Mammary epithelial cell (primary cell): ENCODE measurements at regions of chr9 and their contacts with region 1.

Region 1: GRCh38 chr9:78601957-78602565 is 305.1 kb downstream of the PSAT1 start:
- DNase-seq: peak; percentile 75
- H3K4me3 ChIP-seq: peak overlapping the region in 1 of 3 experiments; percentile 2
- H3K27ac ChIP-seq: peak overlapping the region; percentile 31
- H3K4me1 ChIP-seq: peaks cover 6% of the 10 kb centered on the region
- H3K27me3 ChIP-seq: no peaks in the 10 kb centered on the region
- CTCF ChIP-seq: peak; percentile 87 to 93

Region 2: DNA sequence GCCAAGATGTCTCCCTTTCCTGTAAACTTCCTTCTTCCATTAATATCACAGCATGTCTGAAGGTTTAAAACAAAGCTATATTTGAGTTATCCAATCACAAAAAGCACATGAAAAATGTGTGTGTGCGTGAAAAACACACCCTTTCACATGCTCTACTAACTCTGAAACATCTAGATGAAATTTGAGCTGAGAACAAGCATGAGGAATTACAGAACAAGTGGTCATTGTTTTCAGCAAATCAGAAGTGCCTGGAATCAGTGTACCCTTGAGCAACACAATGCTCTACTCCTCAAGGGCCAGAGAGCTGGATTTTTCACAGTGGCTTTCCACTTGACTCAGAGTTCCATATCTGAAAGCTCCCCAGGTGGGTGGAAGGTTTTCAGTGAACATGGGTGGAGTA is 49.3 kb before region 1 on chr9:
- CTCF ChIA-PET with region 1: no interaction called
- dilution Hi-C with region 1: no loop called
- in situ Hi-C with region 1: no loop called
- intact Hi-C with region 1: no loop called
- DNase-seq: peak; percentile 59
- H3K4me3 ChIP-seq: no peak overlapping the region
- H3K27ac ChIP-seq: no peak overlapping the region
- H3K4me1 ChIP-seq: no peaks in the 10 kb centered on the region
- H3K27me3 ChIP-seq: no peaks in the 10 kb centered on the region
- CTCF ChIP-seq: no peak

Region 3: DNA sequence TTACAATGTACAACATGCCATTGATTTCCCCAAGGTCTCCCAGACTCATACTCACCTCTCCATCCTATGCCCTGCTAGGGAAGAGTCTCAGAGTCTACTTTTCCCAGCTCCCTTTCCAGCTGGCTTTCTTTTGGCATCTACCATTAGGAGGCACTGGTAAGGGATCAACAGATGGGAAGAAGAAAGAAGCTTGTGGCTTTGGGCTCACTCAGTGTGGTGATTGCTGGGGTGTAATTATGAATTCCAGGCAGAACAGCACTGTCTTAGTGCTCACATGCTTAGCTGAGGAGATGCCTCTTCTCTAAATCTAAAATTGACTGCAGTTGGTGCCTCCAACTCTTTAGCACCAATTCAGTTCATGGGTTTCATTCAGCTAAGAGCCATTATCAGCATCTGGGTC is 24.9 kb after region 1 on chr9:
- CTCF ChIA-PET with region 1: no interaction called
- dilution Hi-C with region 1: no loop called
- in situ Hi-C with region 1: no loop called
- intact Hi-C with region 1: no loop called
- DNase-seq: no peak
- H3K4me3 ChIP-seq: no peak overlapping the region
- H3K27ac ChIP-seq: no peak overlapping the region
- H3K4me1 ChIP-seq: no peaks in the 10 kb centered on the region
- H3K27me3 ChIP-seq: peaks cover 2% of the 10 kb centered on the region
- CTCF ChIP-seq: no peak

Region 4: GRCh38 chr9:78707481-78707991 is 105.5 kb after region 1 on chr9:
- CTCF ChIA-PET with region 1: interaction called, 3 read pairs
- dilution Hi-C with region 1: no loop called
- in situ Hi-C with region 1: no loop called
- intact Hi-C with region 1: loop called (anchors 1 kb)
- DNase-seq: peak; percentile 23
- H3K4me3 ChIP-seq: no peak overlapping the region
- H3K27ac ChIP-seq: no peak overlapping the region
- H3K4me1 ChIP-seq: no peaks in the 10 kb centered on the region
- H3K27me3 ChIP-seq: no peaks in the 10 kb centered on the region
- CTCF ChIP-seq: no peak

Region 5: DNA sequence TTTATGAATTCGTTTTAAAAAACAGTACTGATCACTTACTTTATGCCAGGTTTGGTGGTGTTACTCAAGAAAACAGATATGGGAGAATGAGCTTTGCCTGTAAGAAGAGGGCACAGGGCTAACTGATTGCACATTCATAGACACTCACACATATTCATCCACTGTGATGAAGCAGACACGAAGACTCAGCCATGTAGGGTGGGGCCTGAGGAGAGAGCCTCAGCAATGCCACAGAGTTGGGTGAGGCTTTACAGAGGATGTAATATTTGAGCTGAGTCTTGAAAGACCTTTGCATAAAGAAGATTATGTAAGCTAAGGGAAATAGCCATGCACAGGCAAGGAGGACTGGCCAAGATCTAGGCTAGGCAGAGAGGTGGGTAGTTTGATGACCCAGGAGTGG is 167.6 kb after region 1 on chr9:
- CTCF ChIA-PET with region 1: no interaction called
- dilution Hi-C with region 1: no loop called
- in situ Hi-C with region 1: no loop called
- intact Hi-C with region 1: no loop called
- DNase-seq: peak; percentile 40
- H3K4me3 ChIP-seq: no peak overlapping the region
- H3K27ac ChIP-seq: no peak overlapping the region
- H3K4me1 ChIP-seq: no peaks in the 10 kb centered on the region
- H3K27me3 ChIP-seq: no peaks in the 10 kb centered on the region
- CTCF ChIP-seq: no peak

Region 6: DNA sequence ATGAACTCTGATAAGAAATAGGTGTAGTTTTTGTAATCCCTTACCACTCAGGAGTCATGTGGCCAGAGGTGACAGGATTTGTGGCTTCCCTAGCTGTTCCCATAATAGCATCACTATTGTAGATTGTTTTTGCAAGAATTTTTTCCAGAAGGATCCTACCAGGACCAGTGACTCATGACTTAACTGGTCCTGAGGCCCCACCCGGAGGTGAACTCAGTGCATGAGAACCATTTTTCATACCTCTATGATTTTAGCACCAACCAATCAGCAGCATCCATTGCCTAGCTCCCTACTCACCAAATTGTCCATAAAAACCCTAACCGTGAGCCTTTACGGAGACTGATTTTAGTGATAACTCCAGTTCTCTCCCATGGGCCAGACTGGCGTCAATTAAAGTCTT is 179.6 kb after region 1 on chr9:
- CTCF ChIA-PET with region 1: no interaction called
- dilution Hi-C with region 1: no loop called
- in situ Hi-C with region 1: no loop called
- intact Hi-C with region 1: loop called (anchors 1 kb)
- DNase-seq: peak; percentile 41
- H3K4me3 ChIP-seq: no peak overlapping the region
- H3K27ac ChIP-seq: no peak overlapping the region
- H3K4me1 ChIP-seq: no peaks in the 10 kb centered on the region
- H3K27me3 ChIP-seq: no peaks in the 10 kb centered on the region
- CTCF ChIP-seq: peak in 1 of 2 donors; percentile 33

Region 7: DNA sequence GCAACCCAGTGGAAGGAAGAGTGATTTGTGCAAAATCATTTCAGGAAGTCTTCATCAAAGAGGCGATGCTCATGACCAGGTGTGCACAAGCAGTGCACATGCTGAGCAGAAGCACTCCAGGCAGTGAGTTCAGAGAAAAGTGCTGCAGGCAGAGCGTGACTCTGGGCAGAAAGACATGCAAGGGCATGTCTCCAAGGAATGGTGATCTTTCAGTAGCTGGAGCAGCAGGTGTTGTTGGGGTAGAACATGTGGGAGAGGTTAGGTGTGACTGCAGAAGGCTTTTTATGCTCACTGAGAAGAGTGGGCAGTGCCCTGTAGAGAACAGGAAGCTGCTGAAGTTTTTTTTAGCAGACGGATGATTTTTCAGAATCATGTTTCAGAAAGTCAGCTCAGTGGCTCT is 424.3 kb after region 1 on chr9:
- CTCF ChIA-PET with region 1: no interaction called
- dilution Hi-C with region 1: no loop called
- in situ Hi-C with region 1: no loop called
- intact Hi-C with region 1: loop called (anchors 10 kb)
- DNase-seq: peak; percentile 95
- H3K4me3 ChIP-seq: no peak overlapping the region
- H3K27ac ChIP-seq: peak overlapping the region; percentile 48
- H3K4me1 ChIP-seq: peaks cover 55% of the 10 kb centered on the region
- H3K27me3 ChIP-seq: no peaks in the 10 kb centered on the region
- CTCF ChIP-seq: no peak